A673 (cell line): ENCODE measurements at regions of chr12 and their contacts with region 1.

Region 1: DNA sequence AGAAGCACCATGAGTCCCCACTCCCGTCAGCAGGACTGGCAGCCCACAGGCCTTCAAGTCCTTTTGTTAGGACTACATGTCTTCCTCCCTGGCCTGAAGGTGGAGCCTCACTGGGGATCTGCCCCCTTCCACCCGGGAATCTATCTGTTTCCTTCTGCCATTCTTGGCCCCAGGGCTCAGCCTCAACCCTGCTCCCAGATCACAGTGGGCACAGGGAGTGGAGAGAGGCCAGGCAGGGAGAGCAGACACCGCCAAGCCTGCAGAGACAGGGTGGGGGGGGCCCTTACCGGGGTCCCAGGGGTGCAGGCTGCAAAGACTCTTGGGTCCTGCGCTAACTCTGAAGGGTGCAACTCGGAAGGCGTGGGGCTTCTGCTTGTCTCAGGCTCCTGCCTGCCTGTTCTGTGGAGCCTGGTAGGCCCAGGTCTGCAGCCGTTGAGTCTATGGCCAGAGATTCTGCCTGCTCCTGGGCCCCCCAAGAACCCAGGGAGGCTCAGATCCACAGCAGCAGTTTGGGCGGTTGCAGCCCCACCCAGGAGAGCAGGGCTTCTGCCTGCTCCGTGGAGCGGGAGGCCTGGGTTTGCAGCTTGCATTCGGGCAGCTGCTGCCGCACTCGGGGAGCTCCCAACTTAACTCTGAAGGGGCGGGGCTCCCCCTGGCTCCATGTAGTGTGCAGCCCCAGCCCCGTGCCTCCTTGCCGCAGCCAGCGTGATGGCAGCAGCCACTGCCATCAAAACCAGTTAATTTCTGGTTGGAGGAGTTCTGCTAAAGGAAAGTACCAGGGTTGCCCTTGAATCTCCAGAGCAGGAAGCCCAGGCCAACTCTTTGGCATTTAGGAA is 21.7 kb upstream of the PLBD1 start:
- DNase-seq: no peak
- H3K4me3 ChIP-seq: no peak overlapping the region
- H3K27ac ChIP-seq: no peak overlapping the region
- H3K4me1 ChIP-seq: no peaks in the 10 kb centered on the region
- H3K27me3 ChIP-seq: no peaks in the 10 kb centered on the region
- CTCF ChIP-seq: no peak

Region 2: GRCh38 chr12:14326699-14327098 is 262.7 kb before region 1 on chr12:
- CTCF ChIA-PET with region 1: no interaction called
- POLR2A ChIA-PET with region 1: interaction called, 12 read pairs
- intact Hi-C with region 1: no loop called
- DNase-seq: no peak
- H3K4me3 ChIP-seq: no peak overlapping the region
- H3K27ac ChIP-seq: no peak overlapping the region
- H3K4me1 ChIP-seq: no peaks in the 10 kb centered on the region
- H3K27me3 ChIP-seq: no peaks in the 10 kb centered on the region
- CTCF ChIP-seq: no peak